ENCODE measurements at regions of chr1 and their contacts with region 1.

Region 1: GRCh38 chr1:234125283-234125682 is 220.8 kb downstream of the SLC35F3 start:
- DNase-seq: peak; percentile 70
- H3K4me3 Mint-ChIP-seq: no peak overlapping the region
- H3K27ac Mint-ChIP-seq: no peak overlapping the region
- H3K4me1 Mint-ChIP-seq: no peaks in the 10 kb centered on the region
- H3K27me3 Mint-ChIP-seq: peaks cover 24% of the 10 kb centered on the region

Region 2: DNA sequence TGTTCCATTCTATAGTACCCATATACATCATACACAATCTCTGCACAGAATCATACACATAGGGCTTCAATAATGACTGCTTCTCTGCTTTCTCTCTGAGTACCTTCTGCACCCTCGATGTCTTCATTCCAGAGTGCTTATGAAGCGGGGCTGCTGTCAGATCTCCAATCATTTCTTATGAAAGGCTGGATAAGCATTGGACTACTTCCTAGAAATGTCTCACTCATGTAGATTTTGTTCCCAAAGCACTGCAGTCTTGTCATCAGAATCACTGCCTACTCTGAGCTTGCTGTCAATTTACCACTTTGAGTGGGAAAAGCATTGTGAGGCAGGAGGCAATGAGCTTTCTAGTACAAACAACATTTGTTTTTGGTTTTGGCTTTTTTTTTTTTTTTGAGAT is 41.8 kb before region 1 on chr1:
- CTCF ChIA-PET with region 1: no interaction called
- DNase-seq: no peak
- H3K4me3 Mint-ChIP-seq: no peak overlapping the region
- H3K27ac Mint-ChIP-seq: no peak overlapping the region
- H3K4me1 Mint-ChIP-seq: no peaks in the 10 kb centered on the region
- H3K27me3 Mint-ChIP-seq: peaks cover 4% of the 10 kb centered on the region

Region 3: GRCh38 chr1:234114648-234115307 is 10.5 kb before region 1 on chr1:
- CTCF ChIA-PET with region 1: interaction called, 42 read pairs
- DNase-seq: peak; percentile 42
- H3K4me3 Mint-ChIP-seq: no peak overlapping the region
- H3K27ac Mint-ChIP-seq: no peak overlapping the region
- H3K4me1 Mint-ChIP-seq: peaks cover 8% of the 10 kb centered on the region
- H3K27me3 Mint-ChIP-seq: peaks cover 32% of the 10 kb centered on the region

Region 4: DNA sequence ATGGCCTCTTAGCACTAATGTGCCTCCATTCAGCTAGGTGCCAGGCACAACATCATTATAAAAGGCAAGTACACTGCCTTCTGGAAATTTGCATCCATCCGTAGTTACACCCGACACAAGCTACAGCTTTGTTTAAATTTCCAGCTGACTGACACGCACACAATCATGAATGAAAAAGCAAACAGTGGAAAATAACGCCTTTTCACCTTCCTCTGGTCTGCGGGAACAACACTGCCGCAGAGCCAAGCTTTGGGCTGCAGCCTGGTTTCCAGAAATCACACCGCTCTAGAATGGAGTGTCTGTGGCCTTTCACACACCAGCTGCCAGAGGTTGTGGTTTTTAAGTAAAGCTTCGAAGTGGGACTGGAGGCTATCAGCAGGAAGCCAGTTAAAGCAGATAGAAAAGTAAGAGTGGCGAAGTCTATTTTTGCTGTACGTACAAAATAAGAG is 105.2 kb after region 1 on chr1:
- CTCF ChIA-PET with region 1: no interaction called
- DNase-seq: peak; percentile 57
- H3K4me3 Mint-ChIP-seq: peak overlapping the region; percentile 61
- H3K27ac Mint-ChIP-seq: peak overlapping the region; percentile 83
- H3K4me1 Mint-ChIP-seq: peaks cover 25% of the 10 kb centered on the region
- H3K27me3 Mint-ChIP-seq: peaks cover 11% of the 10 kb centered on the region

Region 5: DNA sequence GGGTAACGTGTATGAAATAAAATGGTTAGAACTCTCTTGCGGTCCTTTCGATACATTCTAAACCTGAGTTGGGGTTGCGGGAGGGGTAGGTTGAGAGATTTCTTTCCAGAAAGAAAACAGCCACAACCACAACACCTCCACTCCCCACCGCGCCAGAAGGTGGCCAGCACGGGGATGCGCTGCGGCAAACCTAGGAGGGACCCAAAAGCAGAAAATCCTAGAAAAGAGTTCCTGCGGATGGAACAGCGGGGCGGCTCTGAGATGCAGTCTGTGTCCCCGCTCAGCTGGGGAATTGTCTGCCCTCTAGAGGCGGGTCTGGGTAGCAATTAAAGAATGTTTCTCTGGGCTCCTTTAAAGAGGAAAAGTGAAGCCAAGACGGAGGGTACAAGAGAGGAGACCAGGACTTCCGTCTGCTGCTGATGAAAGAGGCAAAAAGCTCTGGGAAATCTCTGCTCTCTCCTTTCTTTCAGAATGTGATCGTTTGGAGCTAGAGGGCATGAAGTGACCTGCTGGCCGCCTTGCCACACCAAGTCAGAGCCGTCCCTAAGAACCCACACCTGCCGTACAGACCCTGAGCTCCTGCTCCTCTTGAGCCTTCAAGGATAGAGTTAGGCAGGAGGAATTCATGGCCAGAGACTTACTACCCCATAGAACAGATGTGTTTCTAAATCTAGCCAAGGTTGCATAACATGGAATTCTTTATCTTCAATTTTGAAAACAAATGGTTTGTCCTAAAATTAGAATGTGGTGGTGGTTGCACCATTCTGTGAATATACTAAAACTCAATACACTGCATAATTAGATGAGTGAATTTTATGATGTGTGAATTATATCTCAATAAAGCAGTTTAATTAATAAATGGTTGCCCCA is 201.4 kb after region 1 on chr1:
- CTCF ChIA-PET with region 1: interaction called, 32 read pairs
- DNase-seq: peak; percentile 78
- H3K4me3 Mint-ChIP-seq: peak overlapping the region; percentile 75
- H3K27ac Mint-ChIP-seq: peak overlapping the region; percentile 58
- H3K4me1 Mint-ChIP-seq: peaks cover 29% of the 10 kb centered on the region
- H3K27me3 Mint-ChIP-seq: peaks cover 29% of the 10 kb centered on the region